PC-9 (cell line): ENCODE measurements at regions of chr2 and their contacts with region 1.

Region 1: GRCh38 chr2:237691908-237692600 is 64.7 kb downstream of the LRRFIP1 start:
- DNase-seq: peak; percentile 74 to 99
- H3K4me3 ChIP-seq: peak overlapping the region; percentile 83
- H3K27ac ChIP-seq: peak overlapping the region; percentile 97
- H3K4me1 ChIP-seq: peaks cover 76% of the 10 kb centered on the region
- H3K27me3 ChIP-seq: no peaks in the 10 kb centered on the region
- CTCF ChIP-seq: no peak

Region 2: GRCh38 chr2:237500681-237501424 is 191.2 kb before region 1 on chr2:
- CTCF ChIA-PET with region 1: interaction called, 3 read pairs
- POLR2A ChIA-PET with region 1: no interaction called
- intact Hi-C with region 1: loop called (anchors 5 kb)
- DNase-seq: peak; percentile 95 to 100
- H3K4me3 ChIP-seq: peak overlapping the region; percentile 21; the same call in 1 of the 2 replicates
- H3K27ac ChIP-seq: peak overlapping the region; percentile 93
- H3K4me1 ChIP-seq: peaks cover 68% of the 10 kb centered on the region
- H3K27me3 ChIP-seq: no peaks in the 10 kb centered on the region
- CTCF ChIP-seq: no peak

Region 3: DNA sequence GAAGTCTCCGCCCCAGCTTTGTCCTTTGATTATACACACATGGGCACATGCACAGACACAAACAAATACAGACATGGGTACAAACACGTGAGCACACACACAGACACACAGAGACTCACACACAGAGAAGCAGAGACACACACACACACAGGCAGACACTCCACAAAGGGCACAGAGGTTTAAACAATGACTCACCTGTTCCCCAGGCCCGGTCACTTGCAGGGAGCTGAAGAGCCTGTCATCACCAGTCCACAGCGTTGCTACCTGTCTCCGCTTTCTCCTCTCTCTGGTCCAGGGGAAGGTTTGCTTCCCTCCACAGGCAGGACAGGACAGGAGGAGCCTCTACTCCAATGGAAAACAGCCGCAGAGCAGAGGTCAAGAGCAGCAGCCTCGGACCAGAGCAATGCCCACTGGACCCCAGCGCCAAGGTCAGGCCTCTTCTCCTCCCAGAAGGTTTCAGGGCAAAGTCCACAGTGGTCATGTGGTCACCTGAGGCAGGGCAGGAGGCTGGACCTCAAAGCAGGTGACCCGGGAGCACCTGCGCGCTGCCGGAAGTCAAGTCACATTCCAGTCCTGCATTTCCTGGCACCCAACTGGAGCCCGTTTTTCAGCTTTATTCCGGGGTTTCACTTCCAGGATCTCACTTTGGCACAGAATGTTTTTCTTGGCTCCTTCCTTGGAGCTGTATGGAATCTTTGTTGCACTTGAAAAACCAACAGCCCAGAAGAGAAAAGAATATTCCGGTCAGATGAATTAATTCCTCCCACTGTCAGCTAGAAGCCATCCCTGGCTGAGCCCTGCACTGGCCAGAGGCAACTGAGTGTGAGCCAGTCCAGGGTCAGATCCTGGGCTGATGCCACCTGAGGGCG is 101.5 kb before region 1 on chr2 and contains the start of gene RAB17:
- CTCF ChIA-PET with region 1: interaction called, 4 read pairs
- POLR2A ChIA-PET with region 1: interaction called, 4 read pairs
- intact Hi-C with region 1: loop called (anchors 1 kb)
- DNase-seq: peak; percentile 91 to 94
- H3K4me3 ChIP-seq: peak within 1 kb of the TSS; percentile 64
- H3K27ac ChIP-seq: peak within 1 kb of the TSS; percentile 85
- H3K4me1 ChIP-seq: peaks cover 28% of the 10 kb centered on the region
- H3K27me3 ChIP-seq: no peaks in the 10 kb centered on the region
- CTCF ChIP-seq: no peak
- total RNA-seq, gene RAB17: 86.3 and 88.1 TPM in 2 replicates

Region 4: GRCh38 chr2:237662671-237663093 is 29.4 kb before region 1 on chr2:
- CTCF ChIA-PET with region 1: interaction called, 3 read pairs
- POLR2A ChIA-PET with region 1: interaction called, 26 read pairs
- intact Hi-C with region 1: loop called (anchors 5 kb)
- DNase-seq: peak; percentile 95 to 96
- H3K4me3 ChIP-seq: peak overlapping the region; percentile 9; the same call in 1 of the 2 replicates
- H3K27ac ChIP-seq: no peak overlapping the region
- H3K4me1 ChIP-seq: peaks cover 46% of the 10 kb centered on the region
- H3K27me3 ChIP-seq: no peaks in the 10 kb centered on the region
- CTCF ChIP-seq: no peak

Region 5: DNA sequence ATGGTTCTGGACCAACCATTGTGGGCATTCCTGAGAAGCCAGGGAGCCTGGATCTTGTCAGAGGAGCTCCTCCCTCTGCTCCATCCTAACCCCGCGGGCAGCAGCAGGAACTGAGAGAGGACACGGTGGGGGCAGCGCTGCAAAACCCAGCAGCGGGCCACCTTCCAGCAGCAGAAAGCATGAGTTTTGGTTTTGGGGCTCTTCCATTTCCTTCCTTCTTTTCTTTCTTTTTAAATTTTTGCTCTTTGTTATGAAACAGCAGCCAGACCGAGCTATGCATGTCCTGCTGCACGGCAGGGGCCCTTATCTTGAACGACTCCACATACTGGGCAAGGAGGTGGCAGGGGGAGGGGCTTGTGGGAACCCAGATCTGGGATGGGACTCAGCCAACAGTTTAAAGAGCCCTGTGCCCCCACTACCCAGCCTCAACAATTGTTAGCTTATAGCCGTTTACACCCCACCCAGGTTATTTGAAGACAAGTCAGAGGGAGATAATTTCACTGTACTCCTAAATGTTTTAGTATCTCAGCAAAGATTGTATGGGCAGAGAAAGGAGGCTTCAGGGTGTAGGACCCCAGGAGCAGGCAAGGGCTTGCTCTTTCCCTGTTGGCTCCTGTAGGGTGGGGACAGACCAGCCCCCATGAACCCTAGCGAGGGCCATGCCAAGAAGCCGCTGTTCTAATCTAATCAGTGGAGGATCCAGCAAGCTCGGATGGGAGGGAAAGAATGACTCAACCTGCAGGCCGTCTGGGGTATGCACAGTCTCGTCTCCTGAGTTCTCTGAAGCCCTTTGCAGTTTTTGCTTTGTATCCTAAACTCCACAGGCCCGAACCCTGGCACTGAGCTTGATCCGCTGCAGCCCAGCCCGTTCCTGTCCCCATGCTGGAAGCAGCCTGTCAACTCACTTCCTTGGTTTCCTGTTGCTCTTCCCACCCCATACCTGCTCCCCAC is 10.7 kb after region 1 on chr2:
- CTCF ChIA-PET with region 1: no interaction called
- POLR2A ChIA-PET with region 1: interaction called, 6 read pairs
- intact Hi-C with region 1: loop called (anchors 1 kb)
- DNase-seq: peak in 1 of 2 experiments; percentile 54
- H3K4me3 ChIP-seq: no peak overlapping the region
- H3K27ac ChIP-seq: no peak overlapping the region
- H3K4me1 ChIP-seq: peaks cover 5% of the 10 kb centered on the region
- H3K27me3 ChIP-seq: no peaks in the 10 kb centered on the region
- CTCF ChIP-seq: no peak

Region 6: DNA sequence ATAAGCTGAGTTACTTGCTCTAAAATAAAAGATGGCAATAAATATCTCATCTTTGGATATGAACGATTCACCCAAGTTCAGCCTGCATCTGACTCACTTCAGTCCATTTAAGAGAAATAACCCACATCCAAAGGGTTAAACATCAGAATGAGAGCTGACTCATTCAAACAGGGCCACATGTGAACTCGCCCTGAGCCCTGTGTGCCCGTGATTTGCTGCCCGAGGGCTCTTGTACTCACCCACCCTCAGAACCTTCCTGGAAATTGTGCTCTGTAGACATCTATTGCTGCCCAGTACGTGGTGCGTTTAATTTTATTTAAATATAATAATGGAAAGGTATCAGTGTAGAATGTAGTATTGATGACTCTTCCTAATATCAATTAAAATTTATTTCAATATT is 39.6 kb after region 1 on chr2:
- CTCF ChIA-PET with region 1: interaction called, 12 read pairs
- POLR2A ChIA-PET with region 1: interaction called, 4 read pairs
- intact Hi-C with region 1: loop called (anchors 1 kb)
- DNase-seq: peak; percentile 69 to 77
- H3K4me3 ChIP-seq: no peak overlapping the region
- H3K27ac ChIP-seq: peak overlapping the region; percentile 6; the same call in 1 of the 2 replicates
- H3K4me1 ChIP-seq: peaks cover 31% of the 10 kb centered on the region
- H3K27me3 ChIP-seq: no peaks in the 10 kb centered on the region
- CTCF ChIP-seq: no peak

Region 7: GRCh38 chr2:237752761-237753165 is 60.7 kb after region 1 on chr2:
- CTCF ChIA-PET with region 1: no interaction called
- POLR2A ChIA-PET with region 1: no interaction called
- intact Hi-C with region 1: no loop called
- DNase-seq: no peak
- H3K4me3 ChIP-seq: no peak overlapping the region
- H3K27ac ChIP-seq: no peak overlapping the region
- H3K4me1 ChIP-seq: no peaks in the 10 kb centered on the region
- H3K27me3 ChIP-seq: no peaks in the 10 kb centered on the region
- CTCF ChIP-seq: no peak

Region 8: GRCh38 chr2:237858294-237859081 is 166.4 kb after region 1 on chr2:
- CTCF ChIA-PET with region 1: no interaction called
- POLR2A ChIA-PET with region 1: no interaction called
- intact Hi-C with region 1: loop called (anchors 10 kb)
- DNase-seq: peak; percentile 78 to 88
- H3K4me3 ChIP-seq: peak overlapping the region; percentile 64
- H3K27ac ChIP-seq: no peak overlapping the region
- H3K4me1 ChIP-seq: peaks cover 42% of the 10 kb centered on the region
- H3K27me3 ChIP-seq: no peaks in the 10 kb centered on the region
- CTCF ChIP-seq: peak; percentile 93